Gastrocnemius medialis (tissue), 4 donors: ENCODE measurements at regions of chr19 and their contacts with region 1.

Region 1: DNA sequence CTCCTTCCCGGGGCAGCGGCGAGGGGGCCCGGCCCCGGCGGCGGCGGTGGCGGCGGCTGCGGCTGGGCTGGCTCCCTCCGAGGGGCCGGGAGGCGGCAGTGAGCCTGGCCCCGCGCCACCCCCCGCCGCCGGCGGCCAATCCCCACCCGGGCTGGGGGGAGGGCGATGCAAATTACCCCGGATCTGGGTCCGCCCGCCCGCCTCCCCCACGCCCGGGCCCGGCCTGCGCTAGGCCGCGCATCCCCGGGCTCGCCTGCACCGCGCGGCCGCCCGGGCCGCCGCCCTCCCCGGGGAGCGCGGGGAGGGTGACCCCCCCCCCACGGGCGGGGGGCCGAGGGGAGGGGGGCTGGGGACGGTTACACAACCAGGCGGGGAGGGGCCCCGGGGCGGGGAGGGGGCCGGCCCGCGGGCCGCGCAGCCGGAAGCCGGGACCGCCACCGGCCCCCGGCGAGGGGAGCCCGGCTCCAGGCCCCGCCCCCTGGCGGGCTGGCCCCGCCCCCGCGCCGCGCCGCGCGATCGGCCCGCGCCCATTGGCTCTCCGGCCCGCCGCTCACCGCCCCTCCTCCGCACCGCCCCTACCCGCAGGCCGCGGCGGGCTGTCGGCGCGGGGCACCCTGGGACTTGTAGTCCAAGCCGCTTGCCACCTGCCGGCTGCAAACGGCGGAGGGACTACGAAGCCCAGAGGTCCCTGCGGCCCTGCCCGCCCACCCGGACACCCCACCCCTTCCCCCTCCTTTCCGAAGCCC is 1.1 kb downstream of the ZBTB7A start:
- DNase-seq: peak; percentile 96
- ATAC-seq: peak; percentile 57 to 59
- H3K4me3 ChIP-seq: peak overlapping the region; percentile 85 to 100 (median 97)
- H3K27ac ChIP-seq: peak overlapping the region; percentile 85 to 100 (median 100)
- H3K4me1 ChIP-seq: peaks cover 37 to 38% of the 10 kb centered on the region in 2 donors
- H3K27me3 ChIP-seq: no peaks in the 10 kb centered on the region
- CTCF ChIP-seq: no peak
- POLR2A ChIP-seq: peak in 1 of 2 donors; percentile 57

Region 2: DNA sequence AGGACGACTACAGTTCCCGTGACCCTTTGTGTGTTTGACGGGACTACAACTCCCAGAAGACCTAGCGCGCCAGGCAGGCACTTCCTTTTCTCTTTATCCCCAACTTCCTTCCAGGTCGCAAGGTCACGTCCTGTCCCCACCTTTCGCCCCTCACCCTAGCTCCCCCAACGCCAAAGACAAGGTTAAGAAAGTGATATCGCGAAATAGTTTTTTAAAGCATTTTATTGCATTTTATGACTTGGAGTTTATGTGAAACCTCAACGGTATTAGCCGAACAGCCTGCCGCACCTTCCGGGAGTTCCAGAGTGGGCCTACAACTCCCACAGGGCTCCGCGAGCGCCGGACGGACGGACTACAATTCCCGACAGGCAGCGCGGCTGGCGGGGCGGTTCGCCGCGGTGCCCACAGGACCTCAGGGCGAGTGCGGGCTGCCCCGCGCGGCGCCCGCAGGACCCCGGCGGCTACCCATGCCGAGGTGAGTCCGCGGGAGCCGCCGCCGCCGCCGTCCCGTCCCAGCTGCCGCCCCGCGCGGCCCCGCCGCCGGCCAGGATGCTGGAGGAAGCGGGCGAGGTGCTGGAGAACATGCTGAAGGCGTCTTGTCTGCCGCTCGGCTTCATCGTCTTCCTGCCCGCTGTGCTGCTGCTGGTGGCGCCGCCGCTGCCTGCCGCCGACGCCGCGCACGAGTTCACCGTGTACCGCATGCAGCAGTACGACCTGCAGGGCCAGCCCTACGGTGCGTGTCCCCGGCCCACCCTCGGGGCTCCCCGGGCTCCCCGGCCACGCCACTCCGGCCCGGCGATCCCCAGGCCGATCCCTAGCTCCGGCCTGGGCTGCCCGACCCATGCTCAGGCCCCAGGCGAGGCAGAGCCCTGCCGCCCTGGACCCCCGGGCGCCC is 879.9 kb before region 1 on chr19 and contains the start of gene NCLN:
- in situ Hi-C with region 1: no loop called
- intact Hi-C with region 1: loop called (anchors 10 kb)
- DNase-seq: peak; percentile 91 to 92
- ATAC-seq: peak; percentile 98 to 99
- H3K4me3 ChIP-seq: peak within 1 kb of the TSS; percentile 56 to 81 (median 76)
- H3K27ac ChIP-seq: peak within 1 kb of the TSS; percentile 81 to 91 (median 88)
- H3K4me1 ChIP-seq: peaks cover 4 to 16% of the 10 kb centered on the region in 2 donors
- H3K27me3 ChIP-seq: no peaks in the 10 kb centered on the region
- CTCF ChIP-seq: peak in 1 of 5 experiments; percentile 12
- POLR2A ChIP-seq: peak; percentile 60 to 67
- total RNA-seq, gene NCLN: 18.2 to 54.4 (median 43.1) TPM

Region 3: DNA sequence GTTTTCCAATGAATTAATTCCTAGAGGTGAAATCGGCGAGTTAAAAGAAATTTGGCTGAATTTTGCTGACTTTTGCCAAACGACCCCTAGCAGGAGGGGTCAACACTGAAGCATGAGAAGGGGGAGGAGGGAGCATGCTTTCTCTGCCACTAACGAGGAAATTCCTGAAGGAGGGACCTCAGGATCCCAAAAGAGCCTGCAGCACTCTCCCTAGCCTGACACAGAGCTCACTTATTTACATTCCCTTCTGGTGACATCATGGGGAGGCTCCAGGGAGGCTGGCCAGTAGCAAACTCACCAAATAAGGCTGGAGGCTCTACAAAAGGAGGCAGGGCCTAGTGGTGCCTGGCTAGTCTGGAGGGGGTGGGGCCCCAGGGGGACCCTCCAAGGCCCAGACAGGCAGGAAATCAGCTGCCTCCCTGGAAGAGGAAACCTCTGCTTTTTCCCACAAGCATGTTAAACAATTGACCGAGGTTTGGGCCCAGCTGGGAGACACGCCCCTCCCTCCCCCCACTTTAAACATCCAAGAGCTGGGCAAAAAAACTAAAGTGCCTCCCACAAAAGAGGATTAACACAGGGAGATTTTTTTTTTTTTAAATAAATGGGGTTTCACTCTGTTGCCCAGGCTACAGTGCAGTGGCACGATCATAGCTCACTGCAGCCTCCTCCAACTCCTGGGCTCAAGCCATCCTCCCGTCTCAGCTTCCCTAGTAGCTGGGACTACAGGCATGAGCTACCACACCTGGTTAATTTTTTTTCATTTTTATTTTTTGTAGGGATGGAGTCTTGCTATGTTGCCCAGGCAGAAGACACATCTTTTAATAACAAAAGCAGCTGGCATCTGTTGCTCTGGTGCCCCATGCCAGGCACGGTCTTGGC is 96.8 kb before region 1 on chr19:
- in situ Hi-C with region 1: no loop called
- intact Hi-C with region 1: no loop called
- DNase-seq: peak; percentile 82 to 93
- ATAC-seq: peak; percentile 72 to 82
- H3K4me3 ChIP-seq: peak overlapping the region in 3 of 4 donors; percentile 1 to 92 (median 79)
- H3K27ac ChIP-seq: peak overlapping the region; percentile 97 to 100 (median 98)
- H3K4me1 ChIP-seq: peaks cover 42% of the 10 kb centered on the region in 2 donors
- H3K27me3 ChIP-seq: no peaks in the 10 kb centered on the region
- CTCF ChIP-seq: no peak
- POLR2A ChIP-seq: peak in 1 of 2 donors; percentile 62

Region 4: GRCh38 chr19:4007021-4007835 is 58.4 kb before region 1 on chr19 and contains the start of gene PIAS4:
- in situ Hi-C with region 1: loop called in 1 of 4 experiments (anchors 10 kb)
- intact Hi-C with region 1: loop called (anchors 2 kb)
- DNase-seq: peak; percentile 92 to 95
- ATAC-seq: peak; percentile 84 to 92
- H3K4me3 ChIP-seq: peak within 1 kb of the TSS; percentile 75 to 94 (median 86)
- H3K27ac ChIP-seq: peak within 1 kb of the TSS; percentile 86 to 96 (median 88)
- H3K4me1 ChIP-seq: peaks cover 41 to 44% of the 10 kb centered on the region in 2 donors
- H3K27me3 ChIP-seq: no peaks in the 10 kb centered on the region
- CTCF ChIP-seq: peak in 2 of 5 experiments; percentile 51 to 69
- POLR2A ChIP-seq: peak in 1 of 2 donors; percentile 70
- total RNA-seq, gene PIAS4: 15.5 to 20.0 (median 17.5) TPM

Region 5: DNA sequence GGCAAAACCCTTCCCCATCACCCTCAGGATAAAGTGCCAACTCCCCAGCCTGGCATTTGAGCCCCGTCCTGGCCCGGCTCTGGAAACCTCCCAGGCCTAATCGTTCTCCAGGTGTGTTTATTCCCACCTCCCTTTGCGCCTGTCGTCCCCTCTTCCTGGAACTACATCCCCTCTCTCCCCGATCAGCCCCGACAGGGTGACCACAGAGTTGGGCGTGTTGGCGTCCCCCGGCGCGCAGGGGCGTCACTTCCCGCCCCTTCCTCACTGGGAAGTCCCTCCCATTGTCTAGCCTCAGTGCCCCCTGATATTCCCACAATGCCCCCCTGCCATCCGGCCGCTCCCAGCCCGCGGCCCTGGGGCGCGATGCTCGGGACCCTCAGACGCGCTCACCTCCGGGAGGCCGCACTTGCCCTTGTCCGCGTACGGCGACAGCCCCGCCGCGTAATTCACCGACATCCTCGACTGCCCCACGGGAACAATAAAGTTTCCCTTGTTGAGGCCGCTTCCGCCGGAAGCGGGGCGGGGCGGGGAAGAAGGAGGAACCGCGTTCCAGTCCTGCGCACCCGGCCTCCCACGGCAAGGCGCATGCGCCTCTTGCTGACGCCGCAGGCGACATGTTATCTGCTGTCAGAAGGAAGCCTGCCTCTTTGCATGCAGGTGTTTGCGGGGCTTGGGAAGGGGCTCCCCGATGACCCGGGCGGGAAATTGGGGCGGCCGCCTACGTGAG is 116.6 kb after region 1 on chr19 and contains the starts of genes ANKRD24 and SIRT6:
- in situ Hi-C with region 1: no loop called
- intact Hi-C with region 1: loop called (anchors 5 kb)
- DNase-seq: peak; percentile 92 to 95
- ATAC-seq: peak; percentile 86 to 94
- H3K4me3 ChIP-seq: peak within 1 kb of the TSS; percentile 83 to 98 (median 96)
- H3K27ac ChIP-seq: peak within 1 kb of the TSS; percentile 87 to 96 (median 90)
- H3K4me1 ChIP-seq: peaks cover 28 to 29% of the 10 kb centered on the region in 2 donors
- H3K27me3 ChIP-seq: no peaks in the 10 kb centered on the region
- CTCF ChIP-seq: peak in 1 of 5 experiments; percentile 5
- POLR2A ChIP-seq: peak; percentile 82 to 83
- total RNA-seq, gene ANKRD24: 0.13 to 3.0 (median 0.45) TPM
- total RNA-seq, gene SIRT6: 11.7 to 25.7 (median 13.7) TPM